ENCODE measurements at regions of chr14 and their contacts with region 1.

Region 1: GRCh38 chr14:73785873-73786695 is 65.5 kb upstream of the PTGR2 start:
- DNase-seq: peak; percentile 89
- H3K4me3 ChIP-seq: peak overlapping the region; percentile 41 to 89 (median 76)
- H3K27ac ChIP-seq: peak overlapping the region; percentile 99
- H3K4me1 ChIP-seq: peaks cover 55 to 80% (median 66%) of the 10 kb centered on the region in 4 donors
- H3K27me3 ChIP-seq: no peaks in the 10 kb centered on the region
- CTCF ChIP-seq: peak; percentile 28 to 89 (median 37)
- EP300 ChIP-seq: peak; percentile 46
- POLR2A ChIP-seq: peak; percentile 94

Region 2: GRCh38 chr14:73741386-73741875 is 44.7 kb before region 1 on chr14:
- in situ Hi-C with region 1: no loop called
- intact Hi-C with region 1: loop called (anchors 5 kb)
- DNase-seq: peak; percentile 86
- H3K4me3 ChIP-seq: peak overlapping the region in 3 of 4 donors; percentile 1 to 32 (median 7)
- H3K27ac ChIP-seq: peak overlapping the region; percentile 99 to 100 (median 100)
- H3K4me1 ChIP-seq: peaks cover 73 to 81% (median 77%) of the 10 kb centered on the region in 4 donors
- H3K27me3 ChIP-seq: no peaks in the 10 kb centered on the region
- CTCF ChIP-seq: peak in 3 of 5 experiments; percentile 13 to 19 (median 18)
- EP300 ChIP-seq: no peak
- POLR2A ChIP-seq: peak; percentile 35

Region 3: DNA sequence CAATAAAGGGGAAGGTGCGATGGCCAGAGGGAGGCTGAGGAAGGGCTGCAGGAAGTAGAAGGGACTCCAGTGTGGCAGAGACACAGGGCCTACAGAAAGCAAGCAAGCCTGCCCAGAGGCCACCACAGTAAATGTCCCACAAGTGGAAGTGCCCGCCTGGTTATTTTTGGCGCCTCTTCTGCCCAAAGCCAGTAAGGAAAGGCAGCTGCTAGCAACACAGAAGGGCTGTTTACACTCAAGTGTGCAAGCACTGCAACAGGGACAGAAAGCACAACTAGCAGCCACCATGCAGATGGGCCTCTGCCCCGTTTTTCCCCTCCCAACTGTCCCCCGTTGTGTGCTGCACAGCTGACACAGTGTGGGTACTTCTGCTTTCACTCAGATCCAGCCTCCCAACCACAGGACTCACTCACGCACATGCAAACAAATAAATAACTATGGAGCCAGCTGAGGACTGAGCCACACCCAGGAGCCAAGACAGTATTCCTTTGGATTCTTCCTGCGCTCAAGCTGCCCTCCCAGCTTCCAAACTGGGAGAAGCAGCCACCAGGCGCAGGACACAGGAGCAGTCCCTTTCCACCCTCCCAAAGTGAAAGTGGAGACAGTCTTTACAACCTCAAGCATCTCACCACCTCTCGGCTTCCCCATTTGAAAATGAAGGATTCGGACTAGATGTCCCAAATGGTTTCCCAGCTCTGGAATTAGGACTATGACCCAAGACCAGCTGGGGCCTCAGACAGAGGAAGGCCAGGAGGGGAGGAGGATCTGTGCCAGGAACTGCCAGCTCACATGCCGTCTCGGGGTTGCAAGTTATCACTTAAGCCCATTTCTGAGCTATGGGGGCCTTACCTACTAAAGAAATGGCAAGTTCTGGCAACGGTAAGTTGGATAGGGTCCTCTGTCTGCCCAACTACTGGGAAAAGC is 31.9 kb before region 1 on chr14:
- in situ Hi-C with region 1: no loop called
- intact Hi-C with region 1: loop called (anchors 1 kb)
- DNase-seq: peak; percentile 70
- H3K4me3 ChIP-seq: peak overlapping the region in 2 of 4 donors; percentile 2 to 27
- H3K27ac ChIP-seq: peak overlapping the region; percentile 99 to 100 (median 100)
- H3K4me1 ChIP-seq: peaks cover 91 to 99% (median 94%) of the 10 kb centered on the region in 4 donors
- H3K27me3 ChIP-seq: no peaks in the 10 kb centered on the region
- CTCF ChIP-seq: no peak
- EP300 ChIP-seq: no peak
- POLR2A ChIP-seq: no peak

Region 4: GRCh38 chr14:73759714-73760597 is 26.1 kb before region 1 on chr14:
- in situ Hi-C with region 1: no loop called
- intact Hi-C with region 1: loop called (anchors 1 kb)
- DNase-seq: peak; percentile 97
- H3K4me3 ChIP-seq: peak overlapping the region; percentile 72 to 93 (median 85)
- H3K27ac ChIP-seq: peak overlapping the region; percentile 99 to 100 (median 100)
- H3K4me1 ChIP-seq: peaks cover 74 to 88% (median 83%) of the 10 kb centered on the region in 4 donors
- H3K27me3 ChIP-seq: no peaks in the 10 kb centered on the region
- CTCF ChIP-seq: peak in 4 of 5 experiments; percentile 14 to 46 (median 22)
- EP300 ChIP-seq: no peak
- POLR2A ChIP-seq: peak; percentile 97

Region 5: GRCh38 chr14:74240794-74241651 is 454.9 kb after region 1 on chr14:
- in situ Hi-C with region 1: no loop called
- intact Hi-C with region 1: no loop called
- DNase-seq: no peak
- H3K4me3 ChIP-seq: peak overlapping the region in 2 of 4 donors; percentile 11 to 26
- H3K27ac ChIP-seq: no peak overlapping the region
- H3K4me1 ChIP-seq: peaks cover 14 to 27% (median 20%) of the 10 kb centered on the region in 4 donors
- H3K27me3 ChIP-seq: peaks cover 97% of the 10 kb centered on the region
- CTCF ChIP-seq: no peak
- EP300 ChIP-seq: no peak
- POLR2A ChIP-seq: no peak

Measured in transverse colon (tissue), 4 donors.